ENCODE measurements at regions of chr2 and their contacts with region 1.

Region 1: GRCh38 chr2:241967467-241968144 is 98.1 kb downstream of the RTP5 start:
- DNase-seq: no peak
- H3K4me3 ChIP-seq: no peak overlapping the region
- H3K27ac ChIP-seq: no peak overlapping the region
- H3K4me1 ChIP-seq: no peaks in the 10 kb centered on the region
- H3K27me3 ChIP-seq: no peaks in the 10 kb centered on the region
- CTCF ChIP-seq: no peak

Region 2: DNA sequence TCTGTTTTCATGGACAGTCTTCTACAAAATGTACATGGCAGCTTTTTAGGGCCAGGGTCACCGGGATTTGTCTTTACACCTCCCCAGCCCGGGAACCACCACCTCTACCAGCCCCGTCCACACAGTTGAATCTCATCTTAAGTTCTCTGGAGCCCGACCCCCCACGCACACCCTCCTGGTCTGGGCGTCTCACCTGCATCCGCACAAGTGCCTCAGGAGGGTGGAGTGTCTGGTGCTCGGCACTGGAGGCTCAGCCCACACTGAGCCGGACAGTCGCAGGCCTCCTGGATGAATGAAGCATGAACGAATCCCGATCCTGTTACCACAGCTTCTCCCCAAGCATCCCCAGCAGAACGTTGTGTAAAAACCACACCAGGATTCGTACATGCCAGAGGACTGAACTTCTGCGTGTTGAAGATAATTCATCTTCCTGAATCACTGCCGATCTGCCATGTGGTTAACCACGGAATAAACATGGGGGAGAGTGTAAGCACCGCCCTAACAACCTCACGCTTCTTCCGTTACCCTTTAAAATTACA is 63.9 kb after region 1 on chr2:
- CTCF ChIA-PET with region 1: no interaction called
- dilution Hi-C with region 1: no loop called
- in situ Hi-C with region 1: no loop called
- intact Hi-C with region 1: no loop called
- DNase-seq: peak; percentile 88
- H3K4me3 ChIP-seq: no peak overlapping the region
- H3K27ac ChIP-seq: no peak overlapping the region
- H3K4me1 ChIP-seq: peaks cover 5% of the 10 kb centered on the region
- H3K27me3 ChIP-seq: peaks cover 17% of the 10 kb centered on the region
- CTCF ChIP-seq: no peak

Region 3: GRCh38 chr2:242054881-242055801 is 87.5 kb after region 1 on chr2:
- CTCF ChIA-PET with region 1: no interaction called
- dilution Hi-C with region 1: no loop called
- in situ Hi-C with region 1: no loop called
- intact Hi-C with region 1: loop called (anchors 2 kb)
- DNase-seq: no peak
- H3K4me3 ChIP-seq: no peak overlapping the region
- H3K27ac ChIP-seq: no peak overlapping the region
- H3K4me1 ChIP-seq: no peaks in the 10 kb centered on the region
- H3K27me3 ChIP-seq: peaks cover 15% of the 10 kb centered on the region
- CTCF ChIP-seq: no peak